Activated CD4-positive, alpha-beta T cell treated with anti-CD3 and anti-CD28 coated beads for 36 hours (primary cell): ENCODE measurements at regions of chr13 and their contacts with region 1.

Region 1: DNA sequence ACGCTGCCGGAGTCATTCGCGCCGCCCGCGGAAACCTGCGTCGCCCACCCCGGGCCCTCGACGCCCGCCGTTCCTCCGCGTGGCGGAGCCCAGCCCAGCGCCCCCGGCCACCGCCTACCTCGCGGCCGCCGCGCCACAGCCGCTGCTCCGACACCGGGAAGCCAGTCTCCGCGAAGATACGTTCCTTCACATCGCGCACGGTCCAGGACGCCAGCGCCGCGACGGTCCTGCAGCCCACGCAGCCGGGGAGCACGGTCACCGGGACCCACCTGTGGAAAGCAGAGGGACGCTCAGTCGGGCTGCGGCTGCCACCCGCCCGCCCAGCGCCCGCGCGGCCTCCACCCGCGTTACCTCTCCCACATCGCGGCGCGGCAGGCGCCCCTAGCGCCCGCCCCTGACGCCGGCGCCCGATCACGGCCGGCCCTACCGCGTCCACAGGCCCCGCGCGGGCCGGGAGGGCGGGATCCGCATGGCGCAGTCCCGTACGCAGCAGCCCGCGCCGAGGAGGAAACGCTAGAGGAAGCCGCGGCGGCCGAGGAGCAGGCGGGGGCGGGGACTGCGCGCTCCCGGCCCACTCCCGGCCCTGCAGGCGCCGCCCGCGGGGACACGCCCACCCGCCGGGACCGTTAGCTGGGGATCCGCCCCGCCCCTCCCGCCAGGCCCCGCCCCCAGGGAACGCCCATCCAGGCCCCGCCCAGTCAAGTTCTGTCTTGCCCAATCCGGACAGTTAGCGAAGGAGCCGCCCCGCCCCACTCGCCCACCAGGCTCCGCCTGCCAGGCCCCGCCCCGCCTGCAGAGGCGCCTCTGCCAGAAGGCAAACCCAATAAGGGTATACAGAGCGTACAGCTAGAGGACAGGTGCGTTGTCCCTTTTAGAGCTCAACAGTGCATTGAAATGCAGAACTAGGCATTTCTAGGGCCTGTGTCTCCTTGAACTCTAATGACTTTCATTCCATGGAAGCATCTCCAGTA is 58.2 kb downstream of the SACS start:
- DNase-seq: peak; percentile 99
- ATAC-seq: peak; percentile 89
- H3K4me3 Mint-ChIP-seq: peak overlapping the region; percentile 74
- H3K27ac Mint-ChIP-seq: peak overlapping the region; percentile 60
- H3K4me1 Mint-ChIP-seq: peaks cover 67% of the 10 kb centered on the region
- H3K27me3 Mint-ChIP-seq: no peaks in the 10 kb centered on the region

Region 2: DNA sequence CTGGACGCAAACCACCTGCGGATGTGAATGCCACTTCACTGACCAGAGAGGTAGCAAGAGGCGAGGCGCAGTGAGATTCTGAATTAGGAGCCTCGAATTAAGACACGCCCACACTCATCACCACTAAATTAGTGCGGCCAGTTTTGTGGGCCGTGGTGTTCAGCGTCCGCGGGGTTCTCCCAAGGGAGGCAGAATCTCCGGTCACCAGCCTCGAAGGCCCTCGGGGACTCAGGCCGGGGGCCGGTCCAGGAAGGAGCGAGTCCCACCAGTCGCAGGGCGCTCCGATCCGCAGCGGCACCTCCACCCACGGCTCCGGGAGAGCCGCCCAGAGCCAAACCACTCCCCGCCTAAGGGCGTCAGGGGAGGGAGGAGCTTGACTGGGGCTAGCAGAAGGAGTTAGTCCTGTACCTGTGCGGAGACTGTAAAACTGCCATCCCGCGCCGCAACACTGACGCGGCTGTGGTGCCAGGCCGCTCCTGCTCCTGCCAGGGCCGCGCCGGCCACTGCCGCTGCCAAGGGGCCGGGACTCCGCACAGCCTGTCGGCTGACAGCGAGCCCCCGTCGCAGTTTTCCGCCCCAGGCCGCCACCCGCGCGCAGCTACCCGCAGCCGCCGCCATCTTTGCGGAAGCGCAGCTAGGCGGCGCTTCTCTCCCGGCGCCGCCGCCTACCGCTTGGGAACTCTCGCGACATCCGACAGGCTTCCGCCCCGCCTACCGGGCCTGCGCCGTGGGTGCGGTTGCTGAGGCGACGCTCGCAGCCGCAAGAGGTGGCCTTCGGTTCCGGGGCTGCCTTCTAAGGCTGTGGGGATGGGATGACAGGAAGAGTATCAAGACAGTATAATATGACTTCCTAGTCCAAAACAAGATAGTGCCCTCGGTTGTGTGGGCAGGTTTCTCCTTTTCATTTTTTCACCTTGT is 1771.5 kb before region 1 on chr13 and contains the start of gene MICU2:
- CTCF ChIA-PET with region 1: no interaction called
- POLR2A ChIA-PET with region 1: no interaction called
- intact Hi-C with region 1: loop called in 1 of 2 experiments (anchors 1 kb)
- DNase-seq: peak; percentile 97
- ATAC-seq: peak; percentile 96
- H3K4me3 Mint-ChIP-seq: peak within 1 kb of the TSS; percentile 85
- H3K27ac Mint-ChIP-seq: peak within 1 kb of the TSS; percentile 94
- H3K4me1 Mint-ChIP-seq: peaks cover 35% of the 10 kb centered on the region
- H3K27me3 Mint-ChIP-seq: peaks cover 1% of the 10 kb centered on the region
- total RNA-seq, gene MICU2: 28.4 to 28.7 TPM

Region 3: DNA sequence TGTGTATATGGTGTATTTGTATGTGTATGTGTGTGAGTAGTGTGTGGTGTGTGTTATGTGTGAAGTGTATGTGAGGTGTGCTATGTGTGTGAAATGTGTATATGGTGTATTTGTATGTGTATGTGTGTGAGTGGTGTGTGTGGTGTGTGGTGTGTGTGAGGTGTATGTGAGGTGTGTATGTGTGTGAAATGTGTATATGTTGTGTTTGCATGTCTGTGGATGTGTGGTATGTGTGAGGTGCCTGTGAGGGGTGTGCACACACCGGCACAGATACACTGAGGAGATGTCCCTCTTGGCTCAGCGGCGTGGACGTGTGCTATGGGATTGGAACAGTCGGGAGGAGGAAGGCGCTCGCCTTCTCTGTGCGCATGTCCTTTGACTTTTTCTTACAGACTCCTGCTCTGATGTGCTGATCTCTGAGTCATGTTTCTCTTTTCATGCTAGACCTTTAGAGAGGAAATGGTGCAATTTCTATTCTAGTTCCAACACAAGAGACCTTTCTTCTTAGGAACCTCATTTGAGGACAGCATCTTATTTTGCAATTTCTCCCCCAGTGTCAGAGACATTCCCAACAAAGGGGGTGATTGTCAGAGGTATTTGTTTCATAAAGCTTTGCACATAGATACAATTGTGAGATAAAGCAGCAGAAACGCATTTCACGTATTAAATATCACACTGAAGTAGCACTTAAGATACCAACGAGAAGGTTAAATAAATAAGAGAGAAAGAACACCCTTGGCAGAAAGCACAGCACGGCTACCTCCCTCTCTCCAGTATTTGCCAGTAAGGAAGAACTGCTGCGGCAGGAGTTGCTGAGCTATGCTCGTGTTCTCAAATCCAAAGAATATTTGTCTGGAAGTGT is 183.6 kb after region 1 on chr13:
- CTCF ChIA-PET with region 1: no interaction called
- POLR2A ChIA-PET with region 1: no interaction called
- intact Hi-C with region 1: loop called in 1 of 2 experiments (anchors 5 kb)
- DNase-seq: peak; percentile 52
- ATAC-seq: peak; percentile 97
- H3K4me3 Mint-ChIP-seq: no peak overlapping the region
- H3K27ac Mint-ChIP-seq: no peak overlapping the region
- H3K4me1 Mint-ChIP-seq: peaks cover 6% of the 10 kb centered on the region
- H3K27me3 Mint-ChIP-seq: peaks cover 10% of the 10 kb centered on the region

Region 4: GRCh38 chr13:23794267-23795161 is 419.2 kb after region 1 on chr13:
- CTCF ChIA-PET with region 1: no interaction called
- POLR2A ChIA-PET with region 1: no interaction called
- intact Hi-C with region 1: loop called in 1 of 2 experiments (anchors 2 kb)
- DNase-seq: no peak
- ATAC-seq: peak; percentile 75
- H3K4me3 Mint-ChIP-seq: no peak overlapping the region
- H3K27ac Mint-ChIP-seq: no peak overlapping the region
- H3K4me1 Mint-ChIP-seq: peaks cover 26% of the 10 kb centered on the region
- H3K27me3 Mint-ChIP-seq: no peaks in the 10 kb centered on the region

Region 5: GRCh38 chr13:24160454-24161009 is 785.2 kb after region 1 on chr13 and contains the start of gene SPATA13:
- CTCF ChIA-PET with region 1: no interaction called
- POLR2A ChIA-PET with region 1: no interaction called
- intact Hi-C with region 1: loop called in 1 of 2 experiments (anchors 1 kb)
- DNase-seq: peak; percentile 97
- ATAC-seq: peak; percentile 95
- H3K4me3 Mint-ChIP-seq: peak within 1 kb of the TSS; percentile 83
- H3K27ac Mint-ChIP-seq: no peak within 1 kb of the TSS
- H3K4me1 Mint-ChIP-seq: peaks cover 12% of the 10 kb centered on the region
- H3K27me3 Mint-ChIP-seq: peaks cover 9% of the 10 kb centered on the region
- total RNA-seq, gene SPATA13: 47.6 to 51.5 TPM

Region 6: GRCh38 chr13:24512197-24512907 is 1137.1 kb after region 1 on chr13 and contains the start of gene PARP4:
- CTCF ChIA-PET with region 1: no interaction called
- POLR2A ChIA-PET with region 1: no interaction called
- intact Hi-C with region 1: loop called in 1 of 2 experiments (anchors 10 kb)
- DNase-seq: peak; percentile 81
- ATAC-seq: peak; percentile 70
- H3K4me3 Mint-ChIP-seq: peak within 1 kb of the TSS; percentile 74
- H3K27ac Mint-ChIP-seq: peak within 1 kb of the TSS; percentile 86
- H3K4me1 Mint-ChIP-seq: peaks cover 37% of the 10 kb centered on the region
- H3K27me3 Mint-ChIP-seq: peaks cover 6% of the 10 kb centered on the region
- total RNA-seq, gene PARP4: 24.6 to 29.1 TPM